ENCODE measurements at regions of chr11 and their contacts with region 1.

Region 1: DNA sequence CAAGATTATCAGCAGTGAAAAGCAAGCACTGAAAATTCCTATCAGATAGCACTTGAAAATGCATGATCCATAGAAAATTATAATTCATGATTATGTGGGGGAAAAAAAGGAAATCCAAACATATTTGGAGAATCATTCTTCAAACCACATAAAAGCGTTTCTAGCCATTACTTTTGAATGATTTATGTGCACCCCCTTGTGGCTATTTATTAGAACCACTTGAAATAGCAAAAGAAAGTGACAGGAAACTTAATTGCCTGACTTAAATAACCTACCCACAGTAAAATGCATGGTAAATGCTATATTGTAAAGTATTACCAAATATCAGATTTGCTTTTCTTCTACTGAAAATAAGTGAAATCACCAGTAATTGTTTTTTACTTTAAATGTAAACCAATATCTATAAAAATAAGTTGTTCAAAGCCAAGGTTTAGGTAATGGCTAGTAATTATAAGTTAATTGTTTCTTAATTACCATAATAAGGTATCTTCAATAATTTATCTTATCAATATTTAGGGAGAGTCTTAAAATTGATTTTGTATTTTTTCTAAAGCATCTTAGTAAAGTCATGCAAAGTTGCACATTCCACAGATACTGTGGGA is 168.5 kb downstream of the ARHGAP42 start:
- DNase-seq: no peak
- H3K4me3 ChIP-seq: no peak overlapping the region
- H3K27ac ChIP-seq: no peak overlapping the region
- H3K4me1 ChIP-seq: no peaks in the 10 kb centered on the region
- H3K27me3 ChIP-seq: no peaks in the 10 kb centered on the region
- CTCF ChIP-seq: peak; percentile 56 to 78 (median 62)
- POLR2A ChIP-seq: no peak

Region 2: GRCh38 chr11:100575870-100576705 is 279.5 kb before region 1 on chr11:
- intact Hi-C with region 1: loop called (anchors 5 kb)
- DNase-seq: no peak
- H3K4me3 ChIP-seq: no peak overlapping the region
- H3K27ac ChIP-seq: no peak overlapping the region
- H3K4me1 ChIP-seq: peaks cover 0 to 21% (median 0%) of the 10 kb centered on the region in 3 donors
- H3K27me3 ChIP-seq: no peaks in the 10 kb centered on the region
- CTCF ChIP-seq: peak; percentile 57 to 79 (median 68)
- POLR2A ChIP-seq: no peak

Region 3: DNA sequence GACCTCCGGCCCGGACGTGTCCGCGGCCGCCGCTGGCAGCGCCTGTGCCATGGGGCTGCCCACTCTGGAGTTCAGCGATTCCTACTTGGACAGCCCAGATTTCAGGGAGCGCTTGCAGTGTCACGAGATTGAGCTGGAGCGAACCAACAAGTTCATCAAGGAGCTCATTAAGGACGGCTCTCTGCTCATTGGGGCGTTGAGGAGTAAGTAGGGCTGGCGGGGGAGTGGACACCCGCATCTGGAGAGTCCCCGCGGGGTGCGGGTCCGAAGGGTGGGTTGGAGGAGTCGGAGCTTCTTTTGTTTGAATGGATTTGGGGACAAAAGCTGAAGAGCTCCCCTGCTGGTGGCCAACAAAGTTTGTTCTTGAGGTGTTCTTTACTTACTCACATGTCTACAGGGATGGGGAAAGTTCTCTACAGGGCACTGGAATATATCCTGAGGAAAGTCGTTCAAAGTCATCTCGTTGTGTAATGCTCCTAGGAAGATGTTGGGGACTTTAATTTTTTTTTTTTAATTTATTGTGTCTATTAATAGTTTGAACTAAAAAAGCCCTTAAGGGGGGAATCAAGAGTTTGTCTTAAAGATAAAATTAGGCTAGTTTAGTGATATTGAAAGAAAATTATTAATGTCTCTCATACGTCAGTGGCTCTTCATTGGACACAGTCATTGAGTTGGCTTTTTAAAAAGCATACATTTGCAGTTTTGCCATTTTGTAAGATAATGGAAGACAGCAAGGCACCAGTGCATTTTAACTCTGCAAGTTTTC is 167.8 kb before region 1 on chr11:
- intact Hi-C with region 1: loop called (anchors 10 kb)
- DNase-seq: no peak
- H3K4me3 ChIP-seq: peak overlapping the region; percentile 53 to 85 (median 78)
- H3K27ac ChIP-seq: peak overlapping the region; percentile 81 to 88 (median 86)
- H3K4me1 ChIP-seq: peaks cover 0 to 71% (median 13%) of the 10 kb centered on the region in 3 donors
- H3K27me3 ChIP-seq: no peaks in the 10 kb centered on the region
- CTCF ChIP-seq: peak in 5 of 6 experiments; percentile 33 to 73 (median 60)
- POLR2A ChIP-seq: no peak

Measured in esophagus squamous epithelium (tissue), 5 donors.